Right cardiac atrium (tissue), 5 donors: ENCODE measurements at regions of chr19 and their contacts with region 1.

Region 1: GRCh38 chr19:56538254-56538760 is 441 bp upstream of the ZFP28 start:
- DNase-seq: peak; percentile 92 to 97 (median 96)
- ATAC-seq: peak; percentile 99
- H3K4me3 ChIP-seq: peak overlapping the region; percentile 79
- H3K27ac ChIP-seq: peak overlapping the region; percentile 99
- H3K4me1 ChIP-seq: peaks cover 4% of the 10 kb centered on the region
- H3K27me3 ChIP-seq: no peaks in the 10 kb centered on the region

Region 2: GRCh38 chr19:56507446-56508289 is 30.6 kb before region 1 on chr19 and contains the start of gene ZNF471:
- intact Hi-C with region 1: loop called in 1 of 4 experiments (anchors 2 kb)
- DNase-seq: peak; percentile 100
- ATAC-seq: peak; percentile 100
- H3K4me3 ChIP-seq: peak within 1 kb of the TSS; percentile 59
- H3K27ac ChIP-seq: peak within 1 kb of the TSS; percentile 96
- H3K4me1 ChIP-seq: peaks cover 3% of the 10 kb centered on the region
- H3K27me3 ChIP-seq: no peaks in the 10 kb centered on the region
- total RNA-seq, gene ZNF471: 4.5 to 9.3 (median 6.7) TPM

Region 3: GRCh38 chr19:56577719-56578602 is 39.7 kb after region 1 on chr19:
- intact Hi-C with region 1: no loop called
- DNase-seq: no peak
- ATAC-seq: no peak
- H3K4me3 ChIP-seq: no peak overlapping the region
- H3K27ac ChIP-seq: no peak overlapping the region
- H3K4me1 ChIP-seq: no peaks in the 10 kb centered on the region
- H3K27me3 ChIP-seq: no peaks in the 10 kb centered on the region

Region 4: DNA sequence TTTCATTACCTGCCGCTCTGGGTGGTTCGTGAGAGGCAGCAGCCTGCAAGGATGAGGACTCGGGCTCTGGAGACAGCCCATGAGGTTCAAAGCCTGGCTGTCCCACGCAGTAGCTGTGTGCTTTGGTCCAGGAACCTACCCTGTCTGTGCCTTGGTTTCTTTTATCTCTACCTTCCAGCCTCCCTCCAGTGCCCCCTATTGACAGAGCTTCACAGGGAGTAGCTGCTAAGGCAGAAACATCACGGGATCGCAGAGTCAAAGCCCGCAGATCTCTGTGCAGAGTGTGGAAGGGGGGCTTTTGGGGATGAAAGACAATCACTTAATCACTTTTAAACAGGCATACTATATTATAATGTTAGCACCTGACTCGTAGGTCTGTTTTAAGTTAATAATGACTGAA is 73.0 kb after region 1 on chr19:
- intact Hi-C with region 1: no loop called
- DNase-seq: no peak
- ATAC-seq: no peak
- H3K4me3 ChIP-seq: no peak overlapping the region
- H3K27ac ChIP-seq: no peak overlapping the region
- H3K4me1 ChIP-seq: peaks cover 2% of the 10 kb centered on the region
- H3K27me3 ChIP-seq: no peaks in the 10 kb centered on the region